Left cardiac atrium (tissue), 4 donors: ENCODE measurements at regions of chr6 and their contacts with region 1.

Region 1: GRCh38 chr6:20291764-20292580 is 79.7 kb upstream of the MBOAT1 start:
- DNase-seq: peak; percentile 78
- ATAC-seq: peak; percentile 90

Region 2: DNA sequence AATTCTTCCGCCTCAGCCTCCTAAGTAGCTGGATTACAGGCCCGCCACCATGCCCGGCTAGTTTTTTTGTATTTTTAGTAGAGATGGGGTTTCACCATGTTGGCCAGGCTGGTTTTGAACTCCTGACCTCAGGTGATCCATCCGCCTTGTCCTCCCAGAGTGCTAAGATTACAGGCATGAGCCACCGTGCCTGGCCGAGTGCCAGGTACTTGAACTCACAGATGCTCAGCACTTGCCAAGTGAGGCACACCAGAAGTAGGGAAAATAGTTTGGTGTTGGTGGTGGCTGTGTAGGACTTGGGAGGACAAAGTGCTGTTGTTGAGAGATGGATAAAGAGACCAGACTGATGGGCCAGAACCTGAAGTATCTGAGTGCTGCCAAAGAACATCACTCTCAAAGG is 39.7 kb before region 1 on chr6:
- intact Hi-C with region 1: no loop called
- DNase-seq: no peak
- ATAC-seq: no peak

Region 3: GRCh38 chr6:20401205-20402091 is 109.5 kb after region 1 on chr6 and contains the start of gene E2F3:
- intact Hi-C with region 1: loop called (anchors 5 to 10 kb)
- DNase-seq: peak; percentile 100
- ATAC-seq: peak; percentile 95 to 96
- total RNA-seq, gene E2F3: 4.8 to 10.0 TPM

Region 4: DNA sequence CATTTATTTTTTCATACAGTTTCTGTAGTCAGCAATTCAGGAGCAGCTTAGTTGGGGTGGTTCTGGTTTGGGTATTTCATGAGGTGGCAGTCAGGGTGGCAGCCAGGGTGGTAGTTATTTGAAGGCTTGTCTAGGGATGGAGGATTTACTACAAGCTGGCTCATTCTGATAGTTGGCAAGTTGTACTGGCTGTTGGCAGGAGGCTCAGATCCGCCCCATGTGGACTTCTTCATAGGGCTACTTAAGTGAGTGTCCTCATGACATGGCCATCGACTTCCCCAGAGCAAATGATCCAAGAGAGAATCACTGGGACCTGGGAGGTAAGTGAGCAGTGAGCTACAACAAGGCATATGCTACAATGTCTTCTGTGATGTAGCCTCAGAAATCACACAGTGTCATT is 219.9 kb after region 1 on chr6:
- intact Hi-C with region 1: loop called in 1 of 2 experiments (anchors 5 kb)
- DNase-seq: no peak
- ATAC-seq: no peak